Naive thymus-derived CD4-positive, alpha-beta T cell (primary cell): ENCODE measurements at regions of chr5 and their contacts with region 1.

Region 1: DNA sequence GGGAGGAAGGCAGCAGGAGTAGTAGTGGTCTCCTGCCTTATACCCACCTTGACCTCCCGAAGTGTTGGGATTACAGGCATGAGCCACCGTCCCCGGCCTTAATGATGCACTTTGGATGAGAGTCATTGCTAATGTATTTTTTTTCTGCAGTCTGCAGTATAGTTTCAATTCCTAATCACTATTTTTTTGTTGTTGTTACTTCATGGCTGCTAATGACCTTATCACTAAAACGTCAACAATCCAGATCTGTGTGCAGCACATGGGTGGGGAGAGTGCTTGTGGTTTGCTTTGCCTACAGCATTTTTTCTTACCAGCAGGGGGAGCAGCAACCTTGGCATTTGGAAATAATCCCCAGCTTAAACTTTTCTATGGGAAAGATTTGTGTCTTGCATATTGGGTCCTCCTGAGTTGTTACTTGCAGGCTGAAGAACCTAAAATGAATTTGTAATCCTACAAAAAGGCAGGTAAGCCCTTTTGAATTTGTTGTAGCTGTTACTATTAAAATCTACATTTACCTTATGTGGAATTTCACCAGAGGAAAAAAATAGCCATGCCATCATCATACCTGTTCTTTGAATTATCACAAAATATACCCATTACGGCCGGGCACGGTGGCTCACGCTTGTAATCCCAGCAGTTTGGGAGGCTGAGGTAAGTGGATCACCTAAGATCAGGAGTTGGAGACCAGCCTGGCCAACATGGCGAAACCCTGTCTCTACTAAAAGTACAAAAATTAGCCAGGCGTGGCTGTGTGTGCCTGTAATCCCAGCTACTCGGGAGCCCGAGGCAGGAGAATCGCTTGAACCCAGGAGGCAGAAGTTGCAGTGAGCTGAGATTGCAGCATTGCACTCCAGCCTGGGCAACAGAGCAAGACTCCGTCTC is 6.3 kb upstream of the MED7 start:
- DNase-seq: peak; percentile 46 to 86 (median 80)
- ATAC-seq: peak; percentile 94
- H3K4me3 ChIP-seq: no peak overlapping the region
- H3K4me3 Mint-ChIP-seq: peak overlapping the region in 7 of 10 donors; percentile 1 to 73 (median 33)
- H3K27ac ChIP-seq: peak overlapping the region; percentile 42
- H3K27ac Mint-ChIP-seq: peak overlapping the region; percentile 5 to 85 (median 80)
- H3K4me1 ChIP-seq: peaks cover 15 to 31% of the 10 kb centered on the region in 2 donors
- H3K4me1 Mint-ChIP-seq: peaks cover 25 to 56% (median 42%) of the 10 kb centered on the region in 7 donors
- H3K27me3 ChIP-seq: no peaks in the 10 kb centered on the region
- H3K27me3 Mint-ChIP-seq: no peaks in the 10 kb centered on the region

Region 2: GRCh38 chr5:157172403-157172802 is 23.4 kb after region 1 on chr5:
- CTCF ChIA-PET with region 1: interaction called, 5 read pairs
- POLR2A ChIA-PET with region 1: interaction called, 15 read pairs
- intact Hi-C with region 1: no loop called
- DNase-seq: peak; percentile 21 to 90 (median 75)
- ATAC-seq: peak; percentile 98
- H3K4me3 ChIP-seq: peak overlapping the region; percentile 33
- H3K4me3 Mint-ChIP-seq: peak overlapping the region; percentile 49 to 82 (median 73)
- H3K27ac ChIP-seq: peak overlapping the region; percentile 80
- H3K27ac Mint-ChIP-seq: peak overlapping the region; percentile 83 to 96 (median 94)
- H3K4me1 ChIP-seq: peaks cover 20 to 35% of the 10 kb centered on the region in 2 donors
- H3K4me1 Mint-ChIP-seq: peaks cover 33 to 91% (median 73%) of the 10 kb centered on the region in 7 donors
- H3K27me3 ChIP-seq: no peaks in the 10 kb centered on the region
- H3K27me3 Mint-ChIP-seq: no peaks in the 10 kb centered on the region

Region 3: DNA sequence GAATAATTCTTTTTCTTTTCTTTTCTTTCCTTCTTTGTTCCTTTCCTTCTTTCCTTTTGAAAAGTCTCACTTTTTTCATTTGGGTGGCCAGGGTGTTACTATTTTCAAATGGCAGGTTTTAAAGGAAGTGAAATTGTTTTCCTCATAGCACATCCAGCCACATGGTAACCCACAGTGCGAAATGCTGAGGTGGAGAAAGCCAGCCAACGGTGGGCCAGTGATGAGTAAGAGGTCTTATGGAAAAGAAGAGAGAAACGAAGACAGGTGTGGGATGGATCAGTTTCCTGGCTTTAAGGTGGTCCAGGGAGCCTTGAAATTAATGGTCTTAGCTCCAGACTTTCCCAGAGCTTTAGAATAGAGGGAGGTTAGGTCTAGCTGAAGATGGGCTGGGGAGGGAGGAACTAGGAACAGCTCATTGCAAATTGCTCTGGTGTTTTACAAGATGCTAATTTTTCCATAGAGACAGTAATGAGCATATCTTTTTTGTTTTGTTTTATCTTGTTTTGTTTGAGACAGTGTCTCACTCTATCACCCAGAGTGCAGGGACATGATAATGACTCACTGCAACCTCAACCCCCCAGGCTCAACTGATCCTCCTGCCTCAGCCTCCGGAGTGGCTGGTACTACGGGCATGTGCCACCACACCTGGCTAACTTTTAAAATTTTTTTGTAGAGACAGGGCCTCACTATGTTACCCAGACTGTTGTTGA is 49.5 kb after region 1 on chr5:
- CTCF ChIA-PET with region 1: interaction called, 5 read pairs
- POLR2A ChIA-PET with region 1: interaction called, 20 read pairs
- intact Hi-C with region 1: loop called in 1 of 2 experiments (anchors 5 kb)
- DNase-seq: peak in 2 of 9 donors; percentile 58 to 77
- ATAC-seq: peak; percentile 49
- H3K4me3 ChIP-seq: peak overlapping the region; percentile 24
- H3K4me3 Mint-ChIP-seq: peak overlapping the region; percentile 47 to 98 (median 78)
- H3K27ac ChIP-seq: peak overlapping the region; percentile 81
- H3K27ac Mint-ChIP-seq: peak overlapping the region; percentile 78 to 98 (median 87)
- H3K4me1 ChIP-seq: peaks cover 86 to 95% of the 10 kb centered on the region in 2 donors
- H3K4me1 Mint-ChIP-seq: peaks cover 53 to 100% (median 97%) of the 10 kb centered on the region in 7 donors
- H3K27me3 ChIP-seq: no peaks in the 10 kb centered on the region
- H3K27me3 Mint-ChIP-seq: no peaks in the 10 kb centered on the region

Region 4: GRCh38 chr5:157233515-157233914 is 84.5 kb after region 1 on chr5:
- CTCF ChIA-PET with region 1: interaction called, 8 read pairs
- POLR2A ChIA-PET with region 1: interaction called, 6 read pairs
- intact Hi-C with region 1: loop called in 1 of 2 experiments (anchors 1 kb)
- DNase-seq: peak in 7 of 9 donors; percentile 54 to 81 (median 76)
- ATAC-seq: peak; percentile 95
- H3K4me3 ChIP-seq: no peak overlapping the region
- H3K4me3 Mint-ChIP-seq: peak overlapping the region in 5 of 10 donors; percentile 43 to 56 (median 52)
- H3K27ac ChIP-seq: peak overlapping the region; percentile 55
- H3K27ac Mint-ChIP-seq: peak overlapping the region; percentile 24 to 96 (median 85)
- H3K4me1 ChIP-seq: peaks cover 19 to 26% of the 10 kb centered on the region in 2 donors
- H3K4me1 Mint-ChIP-seq: peaks cover 23 to 82% (median 64%) of the 10 kb centered on the region in 7 donors
- H3K27me3 ChIP-seq: no peaks in the 10 kb centered on the region
- H3K27me3 Mint-ChIP-seq: no peaks in the 10 kb centered on the region

Region 5: GRCh38 chr5:157312492-157312891 is 163.5 kb after region 1 on chr5:
- CTCF ChIA-PET with region 1: interaction called, 28 read pairs
- POLR2A ChIA-PET with region 1: interaction called, 19 read pairs
- intact Hi-C with region 1: loop called (anchors 1 kb)
- DNase-seq: peak in 8 of 9 donors; percentile 51 to 71 (median 65)
- ATAC-seq: peak; percentile 96
- H3K4me3 ChIP-seq: no peak overlapping the region
- H3K4me3 Mint-ChIP-seq: peak overlapping the region in 2 of 10 donors; percentile 35
- H3K27ac ChIP-seq: peak overlapping the region; percentile 39
- H3K27ac Mint-ChIP-seq: peak overlapping the region; percentile 50 to 94 (median 86)
- H3K4me1 ChIP-seq: peaks cover 22 to 36% of the 10 kb centered on the region in 2 donors
- H3K4me1 Mint-ChIP-seq: peaks cover 18 to 59% (median 42%) of the 10 kb centered on the region in 7 donors
- H3K27me3 ChIP-seq: no peaks in the 10 kb centered on the region
- H3K27me3 Mint-ChIP-seq: no peaks in the 10 kb centered on the region

Region 6: DNA sequence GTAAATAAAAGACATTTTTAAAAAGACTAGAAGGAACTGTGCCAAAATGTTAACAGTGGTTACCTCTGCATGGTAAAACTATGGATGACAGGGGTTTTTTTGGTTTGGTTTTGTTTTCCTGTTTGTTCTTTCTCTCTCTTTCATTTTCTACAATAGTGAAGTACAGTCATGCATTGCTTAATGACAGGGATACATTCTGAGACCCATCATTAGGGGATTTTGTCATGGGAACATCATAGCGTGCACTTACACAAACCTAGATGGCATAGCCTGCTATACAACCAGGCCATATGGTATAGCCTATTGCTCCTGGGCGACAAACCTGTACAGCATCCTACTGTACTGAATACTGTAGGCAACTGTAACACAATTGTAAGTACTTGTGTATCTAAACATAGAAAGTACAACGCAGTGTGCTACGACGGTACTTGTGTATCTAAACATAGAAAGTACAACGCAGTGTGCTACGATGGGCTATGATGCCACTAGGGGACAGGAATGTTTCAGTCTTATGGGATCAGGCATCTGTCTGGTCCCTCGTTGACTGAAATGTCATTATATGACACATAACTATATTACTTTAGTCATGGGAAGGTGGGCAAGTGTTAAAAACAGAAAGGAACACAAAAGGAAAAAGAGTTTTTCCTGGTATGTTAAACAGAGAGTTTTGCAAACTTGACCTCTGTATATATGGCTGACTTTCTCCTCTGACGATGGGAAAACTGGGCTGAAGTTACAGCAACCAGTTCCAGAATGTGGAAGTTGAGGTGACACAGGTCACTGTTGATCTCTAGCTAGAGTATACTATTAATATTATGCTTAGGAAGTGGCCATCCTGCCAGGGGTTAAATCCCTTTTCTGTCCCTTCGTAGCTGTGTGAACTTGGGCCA is 434.0 kb after region 1 on chr5:
- CTCF ChIA-PET with region 1: no interaction called
- POLR2A ChIA-PET with region 1: no interaction called
- intact Hi-C with region 1: no loop called
- DNase-seq: no peak
- ATAC-seq: peak; percentile 6
- H3K4me3 ChIP-seq: no peak overlapping the region
- H3K4me3 Mint-ChIP-seq: peak overlapping the region in 1 of 10 donors; percentile 55
- H3K27ac ChIP-seq: no peak overlapping the region
- H3K27ac Mint-ChIP-seq: peak overlapping the region in 1 of 9 donors; percentile 75
- H3K4me1 ChIP-seq: peaks cover 0 to 6% of the 10 kb centered on the region in 2 donors
- H3K4me1 Mint-ChIP-seq: peaks cover 0 to 69% (median 0%) of the 10 kb centered on the region in 7 donors
- H3K27me3 ChIP-seq: no peaks in the 10 kb centered on the region
- H3K27me3 Mint-ChIP-seq: no peaks in the 10 kb centered on the region